ENCODE measurements at regions of chr5 and their contacts with region 1.

Region 1: GRCh38 chr5:34486160-34486848 is 169.8 kb upstream of the RAI14 start:
- DNase-seq: peak in 2 of 3 donors; percentile 81 to 95
- ATAC-seq: peak; percentile 81
- H3K4me3 ChIP-seq: no peak overlapping the region
- H3K4me1 ChIP-seq: no peaks in the 10 kb centered on the region
- CTCF ChIP-seq: peak; percentile 52

Region 2: DNA sequence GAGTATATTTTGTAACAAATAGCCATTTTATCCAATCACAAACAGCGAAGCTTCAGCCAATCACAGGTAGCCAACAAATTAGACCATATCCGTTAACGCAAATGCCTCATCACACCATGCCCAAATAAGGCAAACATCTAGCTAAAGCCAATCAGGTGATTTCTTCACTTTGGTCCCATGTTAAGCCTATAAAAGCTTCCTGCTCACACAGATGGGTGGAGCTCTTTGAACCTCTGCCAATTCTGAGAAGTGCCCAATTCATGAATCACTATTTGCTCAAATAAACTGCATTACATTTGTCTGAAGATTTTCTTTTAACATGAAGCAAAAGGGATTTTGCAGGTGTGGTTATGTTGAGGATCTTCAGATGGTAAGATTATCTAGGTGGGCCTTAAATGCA is 1173.2 kb before region 1 on chr5:
- intact Hi-C with region 1: no loop called
- DNase-seq: peak in 1 of 3 donors; percentile 83
- ATAC-seq: peak; percentile 93
- H3K4me3 ChIP-seq: no peak overlapping the region
- H3K4me1 ChIP-seq: no peaks in the 10 kb centered on the region
- CTCF ChIP-seq: no peak

Region 3: GRCh38 chr5:34587355-34588241 is 101.3 kb after region 1 on chr5:
- intact Hi-C with region 1: no loop called
- DNase-seq: no peak
- ATAC-seq: no peak
- H3K4me3 ChIP-seq: no peak overlapping the region
- H3K4me1 ChIP-seq: no peaks in the 10 kb centered on the region
- CTCF ChIP-seq: no peak

Region 4: GRCh38 chr5:34898258-34898895 is 412.1 kb after region 1 on chr5:
- intact Hi-C with region 1: loop called (anchors 1 to 5 kb)
- DNase-seq: peak in 2 of 3 donors; percentile 59 to 82
- ATAC-seq: peak; percentile 87
- H3K4me3 ChIP-seq: no peak overlapping the region
- H3K4me1 ChIP-seq: no peaks in the 10 kb centered on the region
- CTCF ChIP-seq: peak; percentile 56

Measured in mucosa of descending colon (tissue), 3 donors.